ENCODE measurements at regions of chr3 and their contacts with region 1.

Region 1: GRCh38 chr3:188954590-188955208 is 217.1 kb upstream of the TPRG1 start:
- DNase-seq: peak; percentile 73 to 85
- ATAC-seq: peak; percentile 77 to 87
- H3K4me3 ChIP-seq: no peak overlapping the region
- H3K27ac ChIP-seq: peak overlapping the region; percentile 50 to 76 (median 66)
- H3K4me1 ChIP-seq: peaks cover 41 to 42% of the 10 kb centered on the region in 2 donors
- H3K27me3 ChIP-seq: no peaks in the 10 kb centered on the region
- CTCF ChIP-seq: peak; percentile 93 to 96 (median 94)
- POLR2A ChIP-seq: no peak

Region 2: DNA sequence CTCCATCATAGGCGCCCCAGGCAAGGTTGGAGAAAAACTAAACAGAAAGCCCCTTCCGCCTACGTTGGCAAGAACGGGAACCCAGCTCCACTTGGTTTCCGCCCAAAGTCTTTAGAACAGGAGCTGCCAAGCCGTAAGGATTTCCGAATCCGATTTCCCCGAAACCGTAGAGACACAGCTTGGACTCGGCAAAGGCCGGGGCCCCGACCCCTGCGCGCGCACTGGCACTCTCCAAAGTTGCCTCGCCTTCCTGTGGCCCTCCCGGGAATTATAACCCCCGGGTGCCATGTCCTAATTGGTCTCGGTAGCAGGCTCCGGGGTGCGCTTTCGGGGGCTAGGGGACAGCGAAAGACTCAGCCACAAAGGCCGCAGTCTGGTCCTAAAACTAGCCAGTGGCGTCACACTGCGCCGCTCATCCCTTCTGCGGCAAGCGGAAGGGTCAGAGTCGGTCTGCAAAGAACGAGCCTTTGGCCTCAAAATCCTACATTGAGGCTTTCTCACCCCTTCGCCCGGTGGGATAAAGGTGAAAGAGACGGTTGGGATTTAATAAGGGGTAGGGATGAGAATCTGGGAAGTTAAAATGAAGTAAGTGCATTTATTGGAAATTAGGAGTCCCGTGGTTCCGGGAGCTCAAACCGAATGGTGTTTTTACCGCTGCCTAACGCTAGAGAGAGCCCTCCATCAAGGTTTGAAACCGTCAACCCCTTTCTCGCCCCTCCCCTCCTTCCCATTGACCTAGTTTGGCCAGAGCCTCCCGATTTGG is 1216.2 kb before region 1 on chr3:
- in situ Hi-C with region 1: loop called in 1 of 4 experiments (anchors 10 kb)
- intact Hi-C with region 1: no loop called
- DNase-seq: peak; percentile 92 to 93
- ATAC-seq: peak; percentile 34 to 37
- H3K4me3 ChIP-seq: peak overlapping the region; percentile 70 to 94 (median 88)
- H3K27ac ChIP-seq: peak overlapping the region; percentile 95 to 100 (median 98)
- H3K4me1 ChIP-seq: peaks cover 40% of the 10 kb centered on the region in 2 donors
- H3K27me3 ChIP-seq: no peaks in the 10 kb centered on the region
- CTCF ChIP-seq: peak; percentile 66 to 82 (median 72)
- POLR2A ChIP-seq: peak; percentile 54 to 64

Region 3: GRCh38 chr3:188052169-188053030 is 902.3 kb before region 1 on chr3:
- in situ Hi-C with region 1: loop called in 3 of 4 experiments (anchors 10 to 25 kb)
- intact Hi-C with region 1: loop called (anchors 5 kb)
- DNase-seq: peak; percentile 72 to 94
- ATAC-seq: peak; percentile 80 to 89
- H3K4me3 ChIP-seq: no peak overlapping the region
- H3K27ac ChIP-seq: peak overlapping the region; percentile 71 to 87 (median 74)
- H3K4me1 ChIP-seq: peaks cover 26% of the 10 kb centered on the region in 2 donors
- H3K27me3 ChIP-seq: no peaks in the 10 kb centered on the region
- CTCF ChIP-seq: peak in 4 of 5 experiments; percentile 32 to 56 (median 47)
- POLR2A ChIP-seq: peak in 1 of 2 donors; percentile 23

Region 4: DNA sequence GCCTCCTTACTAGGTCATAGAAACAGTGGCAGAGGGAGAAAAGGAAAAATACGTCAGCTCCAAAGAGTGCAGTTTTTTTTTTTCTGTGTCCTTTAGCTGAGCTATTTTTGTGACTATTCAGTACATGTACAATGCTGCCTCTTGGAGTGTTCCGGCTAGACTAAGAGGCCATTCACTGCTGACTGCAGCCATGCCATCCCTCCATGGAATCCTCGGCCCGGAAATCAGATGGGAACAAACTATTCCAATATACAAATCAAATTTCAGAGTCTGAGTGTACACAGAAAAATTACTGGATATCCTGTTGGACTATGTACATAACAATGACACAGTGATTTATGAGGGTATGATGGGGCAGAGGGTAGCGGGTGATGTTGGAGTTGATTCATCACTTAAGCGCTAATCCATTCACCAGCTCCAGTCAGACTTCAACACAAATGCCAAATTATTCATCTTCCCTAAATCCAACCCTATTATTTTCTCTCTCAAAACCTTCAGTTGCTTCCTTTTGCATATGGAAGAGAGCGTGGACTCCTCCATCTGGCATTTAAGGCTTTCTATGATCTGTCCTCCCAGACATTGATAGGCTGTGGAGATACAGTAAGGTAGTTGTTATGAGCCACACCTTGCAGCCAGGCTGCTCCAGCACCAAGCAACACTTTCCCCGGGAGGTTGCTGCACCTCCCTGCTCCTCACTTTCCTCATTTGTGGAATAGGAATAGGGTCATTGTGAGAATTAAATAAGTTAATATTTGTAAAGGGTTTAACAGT is 691.6 kb before region 1 on chr3:
- in situ Hi-C with region 1: loop called in 1 of 4 experiments (anchors 5 kb)
- intact Hi-C with region 1: loop called (anchors 2 kb)
- DNase-seq: peak; percentile 49 to 54
- ATAC-seq: peak; percentile 8 to 17
- H3K4me3 ChIP-seq: no peak overlapping the region
- H3K27ac ChIP-seq: peak overlapping the region; percentile 94 to 99 (median 96)
- H3K4me1 ChIP-seq: peaks cover 83 to 92% of the 10 kb centered on the region in 2 donors
- H3K27me3 ChIP-seq: no peaks in the 10 kb centered on the region
- CTCF ChIP-seq: no peak
- POLR2A ChIP-seq: peak in 1 of 2 donors; percentile 68

Region 5: GRCh38 chr3:188421836-188422540 is 532.7 kb before region 1 on chr3:
- in situ Hi-C with region 1: no loop called
- intact Hi-C with region 1: loop called (anchors 5 kb)
- DNase-seq: no peak
- ATAC-seq: no peak
- H3K4me3 ChIP-seq: no peak overlapping the region
- H3K27ac ChIP-seq: peak overlapping the region; percentile 31 to 50 (median 47)
- H3K4me1 ChIP-seq: peaks cover 21% of the 10 kb centered on the region in 2 donors
- H3K27me3 ChIP-seq: no peaks in the 10 kb centered on the region
- CTCF ChIP-seq: no peak
- POLR2A ChIP-seq: no peak

Region 6: GRCh38 chr3:188584162-188584529 is 370.6 kb before region 1 on chr3:
- in situ Hi-C with region 1: loop called in 1 of 4 experiments (anchors 10 kb)
- intact Hi-C with region 1: loop called (anchors 10 kb)
- DNase-seq: peak in 1 of 2 donors; percentile 17
- ATAC-seq: peak; percentile 76 to 79
- H3K4me3 ChIP-seq: peak overlapping the region; percentile 17 to 44 (median 20)
- H3K27ac ChIP-seq: peak overlapping the region; percentile 67 to 77 (median 74)
- H3K4me1 ChIP-seq: peaks cover 39 to 42% of the 10 kb centered on the region in 2 donors
- H3K27me3 ChIP-seq: no peaks in the 10 kb centered on the region
- CTCF ChIP-seq: no peak
- POLR2A ChIP-seq: no peak

Region 7: GRCh38 chr3:188780193-188781147 is 174.2 kb before region 1 on chr3:
- in situ Hi-C with region 1: no loop called
- intact Hi-C with region 1: loop called (anchors 5 kb)
- DNase-seq: peak; percentile 63 to 68
- ATAC-seq: peak; percentile 97
- H3K4me3 ChIP-seq: no peak overlapping the region
- H3K27ac ChIP-seq: peak overlapping the region; percentile 61 to 73 (median 70)
- H3K4me1 ChIP-seq: peaks cover 14 to 27% of the 10 kb centered on the region in 2 donors
- H3K27me3 ChIP-seq: no peaks in the 10 kb centered on the region
- CTCF ChIP-seq: no peak
- POLR2A ChIP-seq: no peak

Region 8: GRCh38 chr3:188901126-188901525 is 53.6 kb before region 1 on chr3:
- in situ Hi-C with region 1: no loop called
- intact Hi-C with region 1: no loop called
- DNase-seq: no peak
- ATAC-seq: peak in 1 of 2 donors; percentile 56
- H3K4me3 ChIP-seq: no peak overlapping the region
- H3K27ac ChIP-seq: peak overlapping the region in 3 of 4 donors; percentile 9 to 52 (median 41)
- H3K4me1 ChIP-seq: peaks cover 9 to 18% of the 10 kb centered on the region in 2 donors
- H3K27me3 ChIP-seq: no peaks in the 10 kb centered on the region
- CTCF ChIP-seq: no peak
- POLR2A ChIP-seq: no peak

Measured in gastrocnemius medialis (tissue), 4 donors.